ENCODE measurements at regions of chr19 and their contacts with region 1.

Region 1: DNA sequence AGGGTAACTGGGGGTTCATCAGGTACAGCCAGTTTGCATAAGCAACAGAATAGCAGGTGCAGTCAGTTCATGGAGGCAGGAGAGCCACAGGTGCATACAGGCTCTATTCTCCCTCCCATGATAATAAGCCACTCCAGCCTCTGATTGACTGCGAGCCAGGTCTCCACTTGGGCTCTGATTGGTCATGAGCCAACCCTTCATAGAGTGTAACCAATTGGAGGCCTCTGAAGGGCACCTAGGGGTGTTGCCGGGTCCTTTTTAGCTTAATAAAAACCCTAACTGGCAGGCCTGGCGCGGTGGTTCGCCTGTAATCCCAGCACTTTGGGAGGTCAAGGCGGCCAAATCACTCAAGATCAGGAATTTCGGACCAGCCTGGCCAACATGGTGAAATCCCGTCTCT is 8.7 kb upstream of the CKM start:
- DNase-seq: no peak
- ATAC-seq: no peak

Region 2: DNA sequence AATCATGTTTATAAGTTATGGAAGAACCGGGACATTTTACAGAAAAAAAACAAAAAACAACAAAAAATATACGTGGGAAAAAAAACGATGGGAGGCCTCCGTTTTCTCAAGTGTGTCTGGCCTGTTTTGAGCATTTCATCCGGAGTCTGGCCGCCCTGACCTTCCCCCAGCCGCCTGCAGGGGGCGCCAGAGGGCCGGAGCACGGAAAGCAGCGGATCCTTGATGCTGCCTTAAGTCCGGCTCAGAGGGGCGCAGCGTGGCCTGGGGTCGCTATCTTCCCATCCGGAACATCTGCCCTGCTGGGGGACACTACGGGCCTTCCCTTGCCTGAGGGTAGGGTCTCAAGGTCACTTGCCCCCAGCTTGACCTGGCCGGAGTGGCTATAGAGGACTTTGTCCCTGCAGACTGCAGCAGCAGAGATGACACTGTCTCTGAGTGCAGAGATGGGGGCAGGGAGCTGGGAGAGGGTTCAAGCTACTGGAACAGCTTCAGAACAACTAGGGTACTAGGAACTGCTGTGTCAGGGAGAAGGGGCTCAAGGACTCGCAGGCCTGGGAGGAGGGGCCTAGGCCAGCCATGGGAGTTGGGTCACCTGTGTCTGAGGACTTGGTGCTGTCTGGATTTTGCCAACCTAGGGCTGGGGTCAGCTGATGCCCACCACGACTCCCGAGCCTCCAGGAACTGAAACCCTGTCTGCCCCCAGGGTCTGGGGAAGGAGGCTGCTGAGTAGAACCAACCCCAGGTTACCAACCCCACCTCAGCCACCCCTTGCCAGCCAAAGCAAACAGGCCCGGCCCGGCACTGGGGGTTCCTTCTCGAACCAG is 427.6 kb before region 1 on chr19:
- intact Hi-C with region 1: loop called (anchors 10 kb)
- DNase-seq: peak; percentile 89
- ATAC-seq: peak; percentile 69

Region 3: DNA sequence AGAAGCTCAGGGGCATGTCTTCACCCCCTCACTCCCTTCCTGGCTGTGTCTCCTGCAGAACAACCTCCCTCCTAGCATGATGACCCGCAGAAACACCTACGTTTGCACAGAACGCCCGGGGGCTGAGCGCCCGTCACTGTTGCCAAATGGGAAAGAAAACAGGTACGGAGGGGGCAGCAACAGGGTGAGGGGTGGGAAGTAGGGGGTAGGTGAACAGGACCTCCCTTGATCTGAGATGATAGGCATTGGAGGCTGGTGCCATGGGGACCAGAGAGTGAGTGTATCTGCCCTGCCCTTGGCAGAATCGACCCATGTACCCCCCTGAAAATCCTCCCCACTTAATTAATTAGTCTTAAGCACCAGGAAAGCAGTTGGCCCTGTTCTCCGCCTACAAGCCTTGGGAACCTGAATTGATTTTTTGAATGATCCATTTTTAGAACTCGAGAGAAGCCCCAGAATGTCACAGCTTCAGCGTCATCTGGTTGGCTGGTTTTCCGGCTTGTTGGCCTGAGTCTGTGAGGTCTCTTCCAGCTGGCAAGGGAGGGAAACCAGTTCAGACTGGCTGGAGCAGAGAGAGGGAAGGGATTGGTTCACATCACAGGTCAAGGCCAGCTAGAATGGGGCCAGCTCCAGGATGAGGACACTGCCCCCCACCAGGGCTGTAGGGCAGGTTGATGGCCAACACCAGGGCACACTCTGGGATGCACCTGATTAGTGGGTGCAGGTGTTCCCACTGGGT is 37.0 kb before region 1 on chr19:
- intact Hi-C with region 1: no loop called
- DNase-seq: peak; percentile 45
- ATAC-seq: peak; percentile 79

Measured in Right ventricle myocardium inferior (tissue), 1 donor.